Posterior vena cava (tissue), 2 donors: ENCODE measurements at regions of chr3 and their contacts with region 1.

Region 1: GRCh38 chr3:130905551-130905950 is 11.7 kb downstream of the ATP2C1 start:
- DNase-seq: no peak

Region 2: GRCh38 chr3:130787422-130788068 is 118.0 kb before region 1 on chr3:
- intact Hi-C with region 1: no loop called
- DNase-seq: no peak

Region 3: GRCh38 chr3:130850044-130850797 is 55.3 kb before region 1 on chr3:
- intact Hi-C with region 1: no loop called
- DNase-seq: no peak

Region 4: GRCh38 chr3:132486086-132486485 is 1580.5 kb after region 1 on chr3:
- intact Hi-C with region 1: loop called in 1 of 2 experiments (anchors 5 kb)
- DNase-seq: no peak